Adrenal gland (tissue), 19 donors: ENCODE measurements at regions of chr6 and their contacts with region 1.

Region 1: GRCh38 chr6:110873981-110874879 is at the start of gene AMD1:
- DNase-seq: peak; percentile 96 to 99 (median 98)
- H3K4me3 ChIP-seq: peak within 1 kb of the TSS; percentile 57 to 96 (median 71)
- H3K27ac ChIP-seq: peak within 1 kb of the TSS; percentile 77 to 97 (median 95)
- H3K4me1 ChIP-seq: peaks cover 7 to 33% of the 10 kb centered on the region in 2 donors
- H3K27me3 ChIP-seq: no peaks in the 10 kb centered on the region
- CTCF ChIP-seq: peak in 3 of 6 experiments; percentile 19 to 30 (median 29)
- POLR2A ChIP-seq: peak; percentile 99
- total RNA-seq, gene AMD1: 21.3 to 64.1 (median 46.8) TPM

Region 2: GRCh38 chr6:110682460-110682853 is 191.8 kb before region 1 on chr6:
- intact Hi-C with region 1: loop called in 1 of 2 experiments (anchors 5 kb)
- DNase-seq: peak; percentile 54 to 85 (median 83)
- H3K4me3 ChIP-seq: no peak overlapping the region
- H3K27ac ChIP-seq: peak overlapping the region in 2 of 5 donors; percentile 29 to 53
- H3K4me1 ChIP-seq: peaks cover 8 to 18% of the 10 kb centered on the region in 2 donors
- H3K27me3 ChIP-seq: no peaks in the 10 kb centered on the region
- CTCF ChIP-seq: peak; percentile 52 to 92 (median 80)
- POLR2A ChIP-seq: no peak

Region 3: DNA sequence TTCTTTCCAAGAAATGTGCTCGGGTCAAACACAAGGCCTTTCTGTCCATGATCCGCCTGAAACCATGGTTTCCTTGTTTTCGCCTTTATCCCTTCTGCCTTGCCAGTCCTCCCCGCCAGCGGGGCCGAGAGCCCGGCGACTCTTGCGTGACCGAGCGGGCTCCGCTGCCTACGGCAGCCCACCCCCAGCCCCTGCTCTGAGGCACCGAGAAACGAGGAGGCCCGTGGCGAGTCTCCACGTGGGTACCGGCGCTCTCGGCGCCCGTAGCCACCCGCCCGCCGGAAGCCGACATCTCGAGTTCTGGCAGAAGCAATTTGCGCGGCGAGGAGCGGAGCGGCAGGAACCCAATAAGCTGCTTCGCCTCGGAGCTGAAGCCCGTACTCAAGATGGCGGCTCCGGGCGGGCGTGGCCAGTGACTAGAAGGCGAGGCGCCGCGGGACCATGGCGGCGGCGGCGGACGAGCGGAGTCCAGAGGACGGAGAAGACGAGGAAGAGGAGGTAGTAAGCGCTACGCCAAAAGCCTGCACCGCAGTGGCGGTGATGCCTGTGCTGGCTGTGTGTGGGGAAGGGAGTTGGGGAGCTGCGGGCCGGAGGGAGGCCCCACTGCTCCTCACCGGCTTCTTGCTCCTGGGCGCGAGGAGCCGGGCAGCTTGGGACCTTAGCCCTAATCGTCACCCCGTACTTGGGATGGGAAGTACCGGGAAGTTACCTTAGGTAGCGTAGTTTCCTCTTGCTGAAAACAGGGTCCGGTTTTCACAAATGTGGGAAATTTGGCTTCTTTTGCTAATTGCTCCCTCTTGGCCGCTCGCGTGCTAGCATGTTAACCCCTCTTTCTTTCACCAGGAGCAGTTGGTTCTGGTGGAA is 84.3 kb after region 1 on chr6 and contains the start of gene GTF3C6:
- intact Hi-C with region 1: loop called in 1 of 2 experiments (anchors 10 kb)
- DNase-seq: peak; percentile 90 to 98 (median 95)
- H3K4me3 ChIP-seq: peak within 1 kb of the TSS; percentile 20 to 88 (median 74)
- H3K27ac ChIP-seq: peak within 1 kb of the TSS; percentile 68 to 95 (median 88)
- H3K4me1 ChIP-seq: peaks cover 5 to 17% of the 10 kb centered on the region in 2 donors
- H3K27me3 ChIP-seq: no peaks in the 10 kb centered on the region
- CTCF ChIP-seq: peak in 1 of 6 experiments; percentile 20
- POLR2A ChIP-seq: peak; percentile 51 to 81
- total RNA-seq, gene GTF3C6: 48.3 to 95.3 (median 70.2) TPM